IMR-90 (cell line): ENCODE measurements at regions of chr13 and their contacts with region 1.

Region 1: GRCh38 chr13:106981051-106981450 is 413.1 kb upstream of the ARGLU1 start:
- DNase-seq: no peak
- ATAC-seq: no peak
- H3K4me3 ChIP-seq: no peak overlapping the region
- H3K27ac ChIP-seq: no peak overlapping the region
- H3K4me1 ChIP-seq: no peaks in the 10 kb centered on the region
- H3K27me3 ChIP-seq: peaks cover 2% of the 10 kb centered on the region; the same call in 1 of the 2 replicates
- CTCF ChIP-seq: no peak
- POLR2A ChIP-seq: no peak
- RAD21 ChIP-seq: no peak

Region 2: GRCh38 chr13:106874323-106874722 is 106.7 kb before region 1 on chr13:
- CTCF ChIA-PET with region 1: interaction called, 10 read pairs
- POLR2A ChIA-PET with region 1: no interaction called
- dilution Hi-C with region 1: no loop called
- in situ Hi-C with region 1: no loop called
- intact Hi-C with region 1: no loop called
- DNase-seq: no peak
- ATAC-seq: no peak
- H3K4me3 ChIP-seq: no peak overlapping the region
- H3K27ac ChIP-seq: no peak overlapping the region
- H3K4me1 ChIP-seq: no peaks in the 10 kb centered on the region
- H3K27me3 ChIP-seq: no peaks in the 10 kb centered on the region; the same call in 1 of the 2 replicates
- CTCF ChIP-seq: no peak
- POLR2A ChIP-seq: no peak
- RAD21 ChIP-seq: no peak

Region 3: GRCh38 chr13:107251341-107251740 is 270.3 kb after region 1 on chr13:
- CTCF ChIA-PET with region 1: no interaction called
- POLR2A ChIA-PET with region 1: no interaction called
- dilution Hi-C with region 1: no loop called
- in situ Hi-C with region 1: no loop called
- intact Hi-C with region 1: no loop called
- DNase-seq: peak; percentile 40
- ATAC-seq: peak; percentile 48
- H3K4me3 ChIP-seq: no peak overlapping the region
- H3K27ac ChIP-seq: no peak overlapping the region; the same call in 1 of the 2 replicates
- H3K4me1 ChIP-seq: peaks cover 21% of the 10 kb centered on the region
- H3K27me3 ChIP-seq: no peaks in the 10 kb centered on the region
- CTCF ChIP-seq: no peak
- POLR2A ChIP-seq: no peak
- RAD21 ChIP-seq: no peak